CD4-positive, alpha-beta T cell (primary cell): ENCODE measurements at regions of chr10 and their contacts with region 1.

Region 1: GRCh38 chr10:7417103-7417623 is 6.3 kb upstream of the SFMBT2 start:
- DNase-seq: peak in 3 of 14 experiments; percentile 65 to 78 (median 74)
- ATAC-seq: peak; percentile 51
- H3K4me3 ChIP-seq: no peak overlapping the region
- H3K4me3 Mint-ChIP-seq: peak overlapping the region; percentile 54
- H3K27ac ChIP-seq: no peak overlapping the region
- H3K27ac Mint-ChIP-seq: peak overlapping the region; percentile 57
- H3K4me1 ChIP-seq: peaks cover 9% of the 10 kb centered on the region
- H3K4me1 Mint-ChIP-seq: peaks cover 18% of the 10 kb centered on the region
- H3K27me3 ChIP-seq: peaks cover 0 to 5% of the 10 kb centered on the region in 2 experiments
- H3K27me3 Mint-ChIP-seq: no peaks in the 10 kb centered on the region
- CTCF ChIP-seq: peak; percentile 77

Region 2: GRCh38 chr10:6305401-6306321 is 1111.5 kb before region 1 on chr10:
- CTCF ChIA-PET with region 1: no interaction called
- POLR2A ChIA-PET with region 1: no interaction called
- intact Hi-C with region 1: no loop called
- DNase-seq: no peak
- ATAC-seq: no peak
- H3K4me3 ChIP-seq: no peak overlapping the region
- H3K4me3 Mint-ChIP-seq: no peak overlapping the region
- H3K27ac ChIP-seq: no peak overlapping the region
- H3K27ac Mint-ChIP-seq: no peak overlapping the region
- H3K4me1 ChIP-seq: peaks cover 4% of the 10 kb centered on the region
- H3K4me1 Mint-ChIP-seq: peaks cover 5% of the 10 kb centered on the region
- H3K27me3 ChIP-seq: no peaks in the 10 kb centered on the region
- H3K27me3 Mint-ChIP-seq: no peaks in the 10 kb centered on the region
- CTCF ChIP-seq: no peak

Region 3: DNA sequence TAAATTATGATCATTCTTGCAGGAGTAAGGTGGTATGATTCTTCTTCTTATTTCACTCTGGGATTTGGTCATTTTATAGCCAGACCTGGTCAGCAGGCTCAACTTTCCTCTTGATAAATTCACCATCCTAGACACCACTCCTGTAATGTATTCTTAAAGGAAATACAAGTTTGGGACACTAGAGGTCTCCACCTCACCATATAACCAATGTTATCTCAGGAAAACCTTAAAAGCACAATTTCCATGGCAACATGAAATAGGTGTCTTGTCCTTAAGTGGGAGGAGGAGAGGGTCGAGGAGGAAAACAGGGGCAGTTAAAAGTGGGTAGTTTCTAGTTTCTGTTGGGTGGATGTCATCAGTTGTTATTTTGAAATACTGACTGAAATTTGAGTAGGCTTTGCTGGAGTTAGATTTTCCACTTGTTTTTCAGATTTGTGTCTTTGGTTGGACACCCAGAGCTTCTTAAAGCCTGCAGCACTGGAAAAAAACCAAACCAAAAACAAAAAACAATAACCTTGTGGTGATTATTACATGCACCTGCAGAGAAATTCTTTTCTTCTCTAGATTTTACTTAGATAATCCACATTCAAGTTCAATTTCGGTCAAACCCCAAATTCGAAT is 1000.2 kb before region 1 on chr10:
- CTCF ChIA-PET with region 1: no interaction called
- POLR2A ChIA-PET with region 1: no interaction called
- intact Hi-C with region 1: loop called (anchors 2 to 5 kb)
- DNase-seq: peak in 4 of 14 experiments; percentile 22 to 76 (median 74)
- ATAC-seq: peak; percentile 76
- H3K4me3 ChIP-seq: no peak overlapping the region
- H3K4me3 Mint-ChIP-seq: no peak overlapping the region
- H3K27ac ChIP-seq: no peak overlapping the region
- H3K27ac Mint-ChIP-seq: no peak overlapping the region
- H3K4me1 ChIP-seq: no peaks in the 10 kb centered on the region
- H3K4me1 Mint-ChIP-seq: peaks cover 5% of the 10 kb centered on the region
- H3K27me3 ChIP-seq: no peaks in the 10 kb centered on the region
- H3K27me3 Mint-ChIP-seq: no peaks in the 10 kb centered on the region
- CTCF ChIP-seq: peak; percentile 86

Region 4: DNA sequence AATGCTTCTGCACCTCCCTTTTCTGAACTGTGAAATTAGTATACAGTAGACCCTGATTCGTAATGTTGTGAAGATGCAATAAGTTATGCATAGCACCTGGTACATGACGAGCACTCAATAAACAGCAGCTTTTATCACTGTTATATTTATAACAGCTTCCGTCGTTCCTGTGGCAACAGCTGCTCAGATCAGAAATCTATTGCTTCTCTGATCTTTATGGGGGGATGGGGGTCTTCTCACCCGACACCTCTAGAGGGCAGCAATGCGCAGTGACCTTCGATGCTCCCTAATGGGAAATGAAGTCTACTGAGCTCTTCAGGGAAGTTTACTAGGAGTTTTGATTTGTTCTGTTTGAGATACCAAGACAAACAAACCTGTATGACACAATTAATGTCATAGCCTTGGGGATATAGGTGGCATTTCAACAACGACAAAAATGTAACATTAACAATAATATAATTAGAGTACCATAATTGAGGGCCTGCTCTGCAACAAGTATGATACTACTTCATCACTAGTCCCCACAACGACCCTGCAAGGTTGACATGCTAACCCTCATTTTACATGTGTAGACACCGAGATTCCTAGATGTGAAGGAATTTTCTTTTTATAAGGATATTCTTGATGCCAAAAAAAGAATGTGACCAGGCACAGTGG is 295.9 kb before region 1 on chr10:
- CTCF ChIA-PET with region 1: interaction called, 3 read pairs
- POLR2A ChIA-PET with region 1: no interaction called
- intact Hi-C with region 1: loop called in 1 of 2 experiments (anchors 2 kb)
- DNase-seq: peak; percentile 48 to 84 (median 61)
- ATAC-seq: peak; percentile 94
- H3K4me3 ChIP-seq: no peak overlapping the region
- H3K4me3 Mint-ChIP-seq: no peak overlapping the region
- H3K27ac ChIP-seq: no peak overlapping the region
- H3K27ac Mint-ChIP-seq: peak overlapping the region; percentile 65
- H3K4me1 ChIP-seq: peaks cover 7% of the 10 kb centered on the region
- H3K4me1 Mint-ChIP-seq: peaks cover 8% of the 10 kb centered on the region
- H3K27me3 ChIP-seq: no peaks in the 10 kb centered on the region
- H3K27me3 Mint-ChIP-seq: no peaks in the 10 kb centered on the region
- CTCF ChIP-seq: peak; percentile 82